ENCODE measurements at regions of chrX and their contacts with region 1.

Region 1: DNA sequence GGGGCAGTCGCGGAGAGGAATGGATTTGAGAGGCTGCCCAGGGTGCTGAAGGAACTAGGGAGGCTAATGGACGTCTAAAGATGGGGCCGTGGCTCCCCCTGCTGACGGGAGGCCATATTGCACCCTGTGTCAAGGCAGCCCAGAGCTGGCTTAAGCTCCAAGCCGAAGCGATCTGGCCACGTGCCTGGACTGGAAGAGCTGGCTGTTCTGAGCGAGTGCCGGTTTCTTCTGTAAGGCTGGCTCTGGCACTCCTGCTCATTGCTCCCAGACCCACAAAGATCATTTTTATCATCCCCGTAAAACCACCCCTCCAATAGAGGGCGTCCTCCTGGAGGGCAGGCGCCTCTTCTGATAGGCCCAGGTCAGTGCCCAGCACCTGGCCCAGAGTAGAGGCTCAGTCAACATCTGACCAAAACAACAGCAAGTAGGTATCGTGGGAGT is 5.6 kb downstream of the PNCK start:
- DNase-seq: peak; percentile 95

Region 2: GRCh38 chrX:152958524-152959465 is 709.2 kb before region 1 on chrX:
- in situ Hi-C with region 1: loop called (anchors 25 kb)
- DNase-seq: peak; percentile 98

Region 3: GRCh38 chrX:153554519-153555167 is 113.3 kb before region 1 on chrX:
- in situ Hi-C with region 1: loop called (anchors 25 kb)
- DNase-seq: peak; percentile 89